CD8-positive, alpha-beta T cell (primary cell): ENCODE measurements at regions of chr14 and their contacts with region 1.

Region 1: DNA sequence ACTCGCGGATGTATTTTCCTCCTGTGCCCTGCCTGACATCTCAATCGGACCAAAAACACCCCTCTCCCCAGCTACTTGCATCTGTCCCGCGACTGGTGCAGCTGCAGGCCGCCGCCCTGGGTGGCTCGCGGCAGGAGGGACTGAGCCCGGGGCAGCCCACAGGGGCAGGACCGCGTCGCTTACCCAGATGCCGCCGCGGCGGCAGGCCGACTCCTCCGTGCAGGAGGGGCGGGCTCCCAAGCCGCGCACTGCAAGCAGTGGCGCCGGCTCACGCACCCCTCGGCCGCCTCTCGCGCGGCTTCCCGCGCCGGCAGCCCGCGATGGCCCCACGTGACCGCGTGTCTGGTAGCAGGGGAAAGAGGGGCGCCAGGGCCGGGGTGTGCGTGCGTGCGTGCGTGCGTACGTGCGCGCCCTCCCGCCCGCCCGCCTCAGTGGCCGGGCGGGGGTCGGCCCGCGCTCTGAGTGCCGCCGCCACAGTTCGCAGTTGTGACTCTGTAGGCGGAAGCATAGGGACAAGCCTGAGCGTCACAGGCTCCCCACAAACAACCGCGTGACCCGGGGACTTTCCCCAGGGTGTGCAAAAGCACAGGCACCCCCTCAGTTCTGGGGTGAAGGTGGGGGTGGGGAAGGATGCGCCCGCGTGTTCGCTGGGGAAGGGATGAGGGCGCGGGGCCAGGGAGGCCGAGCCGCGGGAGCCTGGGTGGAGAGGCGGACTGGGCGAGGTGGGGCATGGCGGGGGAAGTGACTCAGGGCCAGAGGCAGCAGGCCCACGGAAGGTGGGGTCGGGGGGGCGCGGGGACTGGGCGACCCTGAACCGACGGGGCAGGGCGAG is at the start of gene ZBTB25:
- DNase-seq: peak; percentile 91 to 100 (median 96)
- ATAC-seq: peak; percentile 68
- H3K4me3 ChIP-seq: peak within 1 kb of the TSS; percentile 78 to 95
- H3K4me3 Mint-ChIP-seq: peak within 1 kb of the TSS; percentile 91
- H3K27ac ChIP-seq: peak within 1 kb of the TSS; percentile 99 to 100
- H3K27ac Mint-ChIP-seq: peak within 1 kb of the TSS; percentile 100
- H3K4me1 ChIP-seq: peaks cover 59% of the 10 kb centered on the region
- H3K4me1 Mint-ChIP-seq: peaks cover 66% of the 10 kb centered on the region
- H3K27me3 ChIP-seq: no peaks in the 10 kb centered on the region
- H3K27me3 Mint-ChIP-seq: no peaks in the 10 kb centered on the region
- CTCF ChIP-seq: no peak
- total RNA-seq, gene ZBTB25: 42.3 to 43.8 TPM

Region 2: DNA sequence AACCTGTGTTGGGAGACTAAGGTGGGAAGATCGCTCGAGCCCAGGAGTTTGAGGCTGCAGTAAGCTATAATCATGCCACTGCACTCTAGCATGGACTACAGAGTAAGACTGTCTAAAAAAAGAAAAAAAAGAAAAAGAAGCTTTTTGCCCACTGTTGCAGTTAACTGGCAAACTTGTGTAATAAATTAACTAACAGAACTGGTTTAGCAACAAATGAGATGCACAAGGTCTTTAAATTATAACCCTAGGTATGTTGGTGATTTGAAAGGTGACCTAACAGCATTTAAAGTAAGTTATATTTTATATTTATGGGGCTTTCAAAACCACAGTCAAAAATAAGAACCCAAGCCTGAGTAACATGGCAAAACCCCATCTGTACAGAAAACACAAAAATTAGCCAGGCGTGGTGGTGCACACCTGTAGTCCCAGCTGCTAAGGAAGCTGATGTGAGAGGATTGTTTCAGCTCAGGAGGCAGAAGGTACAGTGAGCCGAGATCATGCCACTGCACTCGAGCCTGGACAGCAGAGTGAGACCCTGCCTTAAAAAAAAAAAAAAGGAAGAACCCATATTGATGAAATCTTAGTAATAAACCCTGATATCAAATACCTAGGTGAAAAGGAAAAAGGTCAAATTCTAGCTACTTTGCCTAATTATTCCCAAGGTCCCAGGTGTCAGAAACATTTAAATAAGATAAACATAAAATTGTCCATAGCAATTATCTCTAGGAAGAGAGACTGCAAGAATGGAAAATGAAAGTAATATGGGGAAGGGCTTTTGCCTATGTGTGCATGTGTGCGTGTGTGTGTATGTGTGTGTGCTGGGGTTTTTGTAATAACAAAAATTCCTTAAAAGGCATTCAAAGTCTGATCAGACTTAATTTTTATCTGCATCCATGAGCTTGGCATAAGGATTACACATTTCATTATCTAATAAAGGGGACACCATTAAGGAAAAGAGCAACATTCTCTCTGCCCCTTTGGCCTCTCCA is 635.5 kb before region 1 on chr14:
- CTCF ChIA-PET with region 1: no interaction called
- POLR2A ChIA-PET with region 1: no interaction called
- intact Hi-C with region 1: loop called in 1 of 2 experiments (anchors 5 kb)
- DNase-seq: peak in 3 of 9 experiments; percentile 34 to 69 (median 50)
- ATAC-seq: no peak
- H3K4me3 ChIP-seq: no peak overlapping the region
- H3K4me3 Mint-ChIP-seq: peak overlapping the region; percentile 52
- H3K27ac ChIP-seq: peak overlapping the region; percentile 21 to 31
- H3K27ac Mint-ChIP-seq: peak overlapping the region; percentile 76
- H3K4me1 ChIP-seq: peaks cover 46% of the 10 kb centered on the region
- H3K4me1 Mint-ChIP-seq: peaks cover 63% of the 10 kb centered on the region
- H3K27me3 ChIP-seq: no peaks in the 10 kb centered on the region
- H3K27me3 Mint-ChIP-seq: no peaks in the 10 kb centered on the region
- CTCF ChIP-seq: no peak

Region 3: GRCh38 chr14:64387694-64388532 is 115.8 kb before region 1 on chr14 and contains the start of gene MTHFD1:
- CTCF ChIA-PET with region 1: no interaction called
- POLR2A ChIA-PET with region 1: interaction called, 23 read pairs
- intact Hi-C with region 1: loop called (anchors 1 kb)
- DNase-seq: peak; percentile 88 to 98 (median 97)
- ATAC-seq: peak; percentile 84
- H3K4me3 ChIP-seq: peak within 1 kb of the TSS; percentile 79 to 80
- H3K4me3 Mint-ChIP-seq: peak within 1 kb of the TSS; percentile 99
- H3K27ac ChIP-seq: peak within 1 kb of the TSS; percentile 33 to 50
- H3K27ac Mint-ChIP-seq: peak within 1 kb of the TSS; percentile 95
- H3K4me1 ChIP-seq: peaks cover 20% of the 10 kb centered on the region
- H3K4me1 Mint-ChIP-seq: peaks cover 37% of the 10 kb centered on the region
- H3K27me3 ChIP-seq: no peaks in the 10 kb centered on the region
- H3K27me3 Mint-ChIP-seq: no peaks in the 10 kb centered on the region
- CTCF ChIP-seq: no peak
- total RNA-seq, gene MTHFD1: 14.4 to 15.6 TPM

Region 4: GRCh38 chr14:64491637-64492036 is 12.1 kb before region 1 on chr14:
- CTCF ChIA-PET with region 1: interaction called, 56 read pairs
- POLR2A ChIA-PET with region 1: interaction called, 72 read pairs
- intact Hi-C with region 1: loop called in 1 of 2 experiments (anchors 2 kb)
- DNase-seq: no peak
- ATAC-seq: no peak
- H3K4me3 ChIP-seq: no peak overlapping the region
- H3K4me3 Mint-ChIP-seq: no peak overlapping the region
- H3K27ac ChIP-seq: no peak overlapping the region
- H3K27ac Mint-ChIP-seq: no peak overlapping the region
- H3K4me1 ChIP-seq: peaks cover 39% of the 10 kb centered on the region
- H3K4me1 Mint-ChIP-seq: peaks cover 62% of the 10 kb centered on the region
- H3K27me3 ChIP-seq: no peaks in the 10 kb centered on the region
- H3K27me3 Mint-ChIP-seq: no peaks in the 10 kb centered on the region
- CTCF ChIP-seq: no peak

Region 5: GRCh38 chr14:64812217-64812811 is 308.6 kb after region 1 on chr14:
- CTCF ChIA-PET with region 1: no interaction called
- POLR2A ChIA-PET with region 1: no interaction called
- intact Hi-C with region 1: no loop called
- DNase-seq: peak in 6 of 9 experiments; percentile 5 to 71 (median 44)
- ATAC-seq: peak; percentile 81
- H3K4me3 ChIP-seq: no peak overlapping the region
- H3K4me3 Mint-ChIP-seq: no peak overlapping the region
- H3K27ac ChIP-seq: no peak overlapping the region
- H3K27ac Mint-ChIP-seq: no peak overlapping the region
- H3K4me1 ChIP-seq: no peaks in the 10 kb centered on the region
- H3K4me1 Mint-ChIP-seq: no peaks in the 10 kb centered on the region
- H3K27me3 ChIP-seq: no peaks in the 10 kb centered on the region
- H3K27me3 Mint-ChIP-seq: peaks cover 20% of the 10 kb centered on the region
- CTCF ChIP-seq: no peak

Region 6: GRCh38 chr14:64914237-64914971 is 410.7 kb after region 1 on chr14 and contains the start of gene CHURC1:
- CTCF ChIA-PET with region 1: no interaction called
- POLR2A ChIA-PET with region 1: interaction called, 3 read pairs
- intact Hi-C with region 1: loop called in 1 of 2 experiments (anchors 1 kb)
- DNase-seq: peak; percentile 91 to 99 (median 97)
- ATAC-seq: peak; percentile 92
- H3K4me3 ChIP-seq: peak within 1 kb of the TSS; percentile 86 to 98
- H3K4me3 Mint-ChIP-seq: peak within 1 kb of the TSS; percentile 85
- H3K27ac ChIP-seq: peak within 1 kb of the TSS; percentile 98 to 99
- H3K27ac Mint-ChIP-seq: peak within 1 kb of the TSS; percentile 91
- H3K4me1 ChIP-seq: peaks cover 42% of the 10 kb centered on the region
- H3K4me1 Mint-ChIP-seq: peaks cover 47% of the 10 kb centered on the region
- H3K27me3 ChIP-seq: no peaks in the 10 kb centered on the region
- H3K27me3 Mint-ChIP-seq: no peaks in the 10 kb centered on the region
- CTCF ChIP-seq: no peak
- total RNA-seq, gene CHURC1: 43.9 to 46.7 TPM